Colonic mucosa (tissue), 4 donors: ENCODE measurements at regions of chrX and their contacts with region 1.

Region 1: GRCh38 chrX:109714340-109714958 is 18.6 kb downstream of the ACSL4 start:
- DNase-seq: no peak
- H3K4me3 ChIP-seq: no peak overlapping the region
- H3K27ac ChIP-seq: no peak overlapping the region
- H3K4me1 ChIP-seq: no peaks in the 10 kb centered on the region
- H3K27me3 ChIP-seq: no peaks in the 10 kb centered on the region
- CTCF ChIP-seq: no peak

Region 2: GRCh38 chrX:109475174-109475891 is 239.1 kb before region 1 on chrX:
- intact Hi-C with region 1: no loop called
- DNase-seq: peak; percentile 20
- H3K4me3 ChIP-seq: no peak overlapping the region
- H3K27ac ChIP-seq: no peak overlapping the region
- H3K4me1 ChIP-seq: no peaks in the 10 kb centered on the region
- H3K27me3 ChIP-seq: no peaks in the 10 kb centered on the region
- CTCF ChIP-seq: peak; percentile 38

Region 3: DNA sequence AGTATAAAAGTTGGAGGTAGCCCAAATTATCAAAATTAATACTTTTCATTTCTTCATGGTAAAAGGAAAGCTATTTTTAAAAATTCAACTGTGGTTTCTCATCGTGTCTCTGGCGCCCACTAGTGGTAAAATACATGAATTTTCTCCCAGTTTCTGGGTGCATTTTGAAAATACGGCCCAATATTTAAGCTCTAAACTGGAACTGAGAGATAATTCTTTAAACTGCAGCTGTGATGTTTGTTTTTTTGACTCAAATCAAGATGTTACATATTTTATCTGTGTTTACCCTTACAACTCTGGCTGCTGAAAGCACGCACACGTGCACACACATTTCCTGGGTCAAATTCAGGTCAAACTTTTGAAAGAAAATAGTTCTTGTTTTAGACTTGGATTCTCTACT is 142.5 kb after region 1 on chrX:
- intact Hi-C with region 1: loop called (anchors 10 kb)
- DNase-seq: no peak
- H3K4me3 ChIP-seq: no peak overlapping the region
- H3K27ac ChIP-seq: no peak overlapping the region
- H3K4me1 ChIP-seq: no peaks in the 10 kb centered on the region
- H3K27me3 ChIP-seq: no peaks in the 10 kb centered on the region
- CTCF ChIP-seq: peak; percentile 86

Region 4: GRCh38 chrX:109952984-109953905 is 238.8 kb after region 1 on chrX:
- intact Hi-C with region 1: no loop called
- DNase-seq: no peak
- H3K4me3 ChIP-seq: no peak overlapping the region
- H3K27ac ChIP-seq: no peak overlapping the region
- H3K4me1 ChIP-seq: no peaks in the 10 kb centered on the region
- H3K27me3 ChIP-seq: no peaks in the 10 kb centered on the region
- CTCF ChIP-seq: no peak